Lower leg skin (tissue), 4 donors: ENCODE measurements at regions of chr6 and their contacts with region 1.

Region 1: GRCh38 chr6:42511803-42512422 is 51.9 kb upstream of the UBR2 start:
- DNase-seq: no peak
- H3K4me3 ChIP-seq: no peak overlapping the region
- CTCF ChIP-seq: no peak
- POLR2A ChIP-seq: no peak

Region 2: DNA sequence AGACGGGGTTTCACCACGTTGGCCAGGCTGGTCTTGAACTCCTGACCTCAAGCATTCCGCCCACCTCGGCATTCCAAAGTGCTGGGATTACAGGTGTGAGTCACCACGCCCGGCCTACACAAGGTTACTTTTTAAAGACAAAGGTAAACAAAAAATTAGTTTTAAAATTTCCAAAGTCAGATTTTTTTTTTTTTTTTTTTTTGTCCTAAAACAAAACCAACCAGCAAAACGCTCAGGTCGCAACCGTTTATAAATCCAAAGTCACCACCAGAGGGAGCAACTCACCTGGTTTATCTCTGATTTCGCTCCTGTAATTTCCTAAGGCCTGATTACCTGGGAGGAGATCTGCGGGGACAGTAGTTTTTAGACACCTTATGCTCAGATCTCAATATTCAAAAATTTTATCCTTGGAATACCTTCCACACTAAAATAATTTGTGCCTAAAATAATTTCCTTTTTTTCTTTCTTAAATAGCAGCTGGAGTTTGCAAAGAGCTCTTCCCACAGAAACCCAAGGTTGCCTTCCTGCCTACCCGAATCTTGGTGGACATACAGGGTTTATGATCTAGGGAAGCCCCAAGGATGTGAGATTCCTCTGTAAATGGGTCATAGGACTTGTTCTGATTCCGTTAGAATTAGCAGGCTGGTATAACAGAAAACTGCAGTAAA is 1205.6 kb before region 1 on chr6:
- intact Hi-C with region 1: no loop called
- DNase-seq: peak in 1 of 2 donors; percentile 24
- H3K4me3 ChIP-seq: no peak overlapping the region
- CTCF ChIP-seq: no peak
- POLR2A ChIP-seq: no peak

Region 3: DNA sequence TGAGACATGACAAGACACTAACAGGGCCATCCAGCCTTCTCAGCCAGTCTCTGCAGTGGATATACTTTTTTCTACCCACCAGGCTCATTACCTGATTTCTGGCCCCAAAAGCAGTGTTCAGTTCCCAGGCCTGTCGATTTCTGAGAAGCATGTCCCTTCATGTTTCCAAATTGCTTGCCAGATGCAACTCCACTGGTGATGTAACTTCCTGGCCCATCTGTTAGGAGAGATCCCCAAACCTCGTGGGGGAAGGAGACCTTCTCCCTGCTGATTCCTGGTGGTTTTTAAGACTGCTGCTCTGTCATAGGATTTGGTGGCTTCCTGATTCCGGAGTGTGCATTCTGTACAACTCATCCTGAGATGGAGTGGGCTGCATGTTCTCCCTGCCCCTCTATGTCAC is 262.6 kb before region 1 on chr6:
- intact Hi-C with region 1: no loop called
- DNase-seq: peak in 1 of 2 donors; percentile 49
- H3K4me3 ChIP-seq: no peak overlapping the region
- CTCF ChIP-seq: no peak
- POLR2A ChIP-seq: no peak

Region 4: DNA sequence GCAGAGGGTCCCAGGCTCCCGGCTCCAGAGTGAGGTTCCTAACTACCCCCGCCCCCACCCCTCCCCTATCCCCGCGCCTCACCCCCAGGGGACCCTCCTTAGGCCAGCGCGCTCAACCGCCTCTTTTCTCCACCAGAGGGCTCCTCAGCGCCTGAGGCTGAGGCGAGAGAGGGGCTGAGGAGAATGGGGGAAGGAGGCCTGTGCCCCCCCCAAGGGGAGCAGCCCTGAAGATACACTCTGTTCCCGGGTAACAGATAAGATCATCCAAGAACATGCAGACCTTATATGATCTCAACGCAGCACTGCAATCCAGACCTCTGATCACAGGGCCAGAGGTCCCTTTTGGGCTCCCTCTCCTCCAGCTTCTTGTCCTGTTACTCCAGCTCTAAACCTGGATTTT is 250.9 kb before region 1 on chr6:
- intact Hi-C with region 1: loop called (anchors 10 kb)
- DNase-seq: peak in 1 of 2 donors; percentile 82
- H3K4me3 ChIP-seq: no peak overlapping the region
- CTCF ChIP-seq: no peak
- POLR2A ChIP-seq: no peak

Region 5: GRCh38 chr6:42674780-42675179 is 162.9 kb after region 1 on chr6:
- intact Hi-C with region 1: no loop called
- DNase-seq: no peak
- H3K4me3 ChIP-seq: no peak overlapping the region
- CTCF ChIP-seq: no peak
- POLR2A ChIP-seq: no peak